Activated B cell treated with CpG ODN at 0.5 μM for 24 hours (primary cell): ENCODE measurements at regions of chr18 and their contacts with region 1.

Region 1: DNA sequence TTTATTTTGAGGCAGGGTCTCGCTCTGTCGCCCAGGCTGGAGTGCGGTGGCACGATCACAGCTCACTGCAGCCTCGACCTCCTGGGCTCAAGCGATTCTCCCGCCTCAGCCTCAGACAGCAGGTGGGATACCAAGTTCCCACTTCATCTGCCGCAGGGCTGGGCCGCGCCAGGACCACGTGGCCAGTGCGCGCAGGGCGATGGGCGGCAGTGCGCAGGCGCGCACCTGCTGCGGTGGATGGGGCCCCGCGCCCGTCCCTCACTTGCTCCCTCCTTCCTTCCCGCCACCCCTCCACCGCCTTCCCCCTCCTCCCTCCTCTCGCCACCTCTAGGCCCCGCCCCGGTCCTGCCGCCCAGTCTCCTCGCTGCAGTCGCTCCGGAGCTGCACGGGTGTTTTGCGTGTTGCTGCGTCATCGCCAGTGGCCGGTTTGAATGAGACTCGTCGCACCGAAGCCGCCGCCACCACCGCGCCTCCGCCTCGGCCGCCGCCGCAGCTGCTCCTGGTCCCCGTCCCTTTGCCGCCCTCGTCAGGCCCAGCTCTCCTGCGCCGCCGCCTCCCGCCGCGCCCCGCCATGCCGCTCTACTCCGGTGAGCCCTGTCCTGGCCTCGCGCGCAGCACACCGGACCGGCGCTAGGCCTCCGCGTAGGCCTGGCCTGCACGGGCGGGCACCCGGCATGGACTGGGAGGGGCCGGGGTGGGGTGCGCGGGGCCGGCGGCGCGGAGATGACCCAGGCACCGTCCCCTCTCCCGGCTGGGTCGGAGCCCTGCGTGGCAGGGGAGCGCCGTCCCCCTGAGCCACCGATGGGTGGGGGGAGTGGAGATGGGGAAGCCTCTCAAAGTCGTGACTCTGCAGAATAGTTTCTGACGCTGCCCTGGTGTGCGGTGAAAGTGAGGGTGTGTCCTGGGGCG is at the start of gene USP14:
- DNase-seq: peak; percentile 88
- ATAC-seq: peak; percentile 96
- H3K4me3 Mint-ChIP-seq: peak within 1 kb of the TSS; percentile 93
- H3K27ac Mint-ChIP-seq: peak within 1 kb of the TSS; percentile 87
- H3K4me1 Mint-ChIP-seq: peaks cover 30% of the 10 kb centered on the region
- H3K27me3 Mint-ChIP-seq: peaks cover 2% of the 10 kb centered on the region
- CTCF ChIP-seq: no peak
- total RNA-seq, gene USP14: 53.1 and 53.9 TPM in 2 replicates

Region 2: GRCh38 chr18:111292-112014 is 46.9 kb before region 1 on chr18:
- CTCF ChIA-PET with region 1: no interaction called
- POLR2A ChIA-PET with region 1: no interaction called
- intact Hi-C with region 1: loop called (anchors 5 kb)
- DNase-seq: peak; percentile 36
- ATAC-seq: peak; percentile 47
- H3K4me3 Mint-ChIP-seq: peak overlapping the region; percentile 75
- H3K27ac Mint-ChIP-seq: no peak overlapping the region
- H3K4me1 Mint-ChIP-seq: peaks cover 4% of the 10 kb centered on the region
- H3K27me3 Mint-ChIP-seq: peaks cover 9% of the 10 kb centered on the region
- CTCF ChIP-seq: no peak

Region 3: GRCh38 chr18:136433-136832 is 21.9 kb before region 1 on chr18:
- CTCF ChIA-PET with region 1: no interaction called
- POLR2A ChIA-PET with region 1: no interaction called
- intact Hi-C with region 1: no loop called
- DNase-seq: no peak
- ATAC-seq: no peak
- H3K4me3 Mint-ChIP-seq: no peak overlapping the region
- H3K27ac Mint-ChIP-seq: no peak overlapping the region
- H3K4me1 Mint-ChIP-seq: no peaks in the 10 kb centered on the region
- H3K27me3 Mint-ChIP-seq: peaks cover 2% of the 10 kb centered on the region
- CTCF ChIP-seq: no peak